Psoas muscle (tissue), 8 donors: ENCODE measurements at regions of chr11 and their contacts with region 1.

Region 1: DNA sequence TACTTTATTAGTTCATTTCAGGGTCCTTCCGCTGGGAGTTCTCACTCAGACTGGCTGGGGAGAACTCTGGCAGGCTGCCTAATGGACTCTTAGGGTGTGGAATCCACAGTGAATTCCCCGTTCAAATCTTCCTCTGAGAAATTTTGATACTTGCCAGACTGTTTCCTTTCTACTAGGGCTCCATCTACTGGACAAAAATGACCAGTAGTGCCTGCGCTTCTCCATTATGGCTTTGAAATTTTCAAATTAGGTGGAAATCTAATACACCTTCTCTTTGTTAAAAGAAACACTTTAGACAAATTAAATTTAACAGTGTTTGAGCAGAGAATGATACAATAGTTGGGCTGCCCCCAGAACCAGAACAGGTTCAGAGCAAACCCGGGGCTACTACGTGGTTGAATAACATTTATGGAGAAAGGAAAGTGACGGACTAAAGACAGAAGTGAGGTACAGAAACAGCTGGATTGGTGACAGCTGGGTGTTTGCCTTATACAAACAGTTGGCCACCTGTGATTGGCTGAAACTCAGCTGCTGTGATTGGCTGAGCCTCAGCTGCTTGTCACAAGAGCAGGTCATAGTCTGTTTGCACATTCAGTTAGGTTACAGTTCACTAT is 52.9 kb upstream of the FDX1 start:
- DNase-seq: peak; percentile 60 to 69
- ATAC-seq: peak; percentile 78 to 93 (median 86)
- H3K4me3 ChIP-seq: peak overlapping the region; percentile 46
- H3K27ac ChIP-seq: peak overlapping the region; percentile 51
- H3K4me1 ChIP-seq: no peaks in the 10 kb centered on the region
- H3K27me3 ChIP-seq: no peaks in the 10 kb centered on the region
- CTCF ChIP-seq: peak; percentile 76

Region 2: GRCh38 chr11:109853156-109853776 is 523.6 kb before region 1 on chr11:
- intact Hi-C with region 1: loop called in 1 of 2 experiments (anchors 10 kb)
- DNase-seq: no peak
- ATAC-seq: no peak
- H3K4me3 ChIP-seq: no peak overlapping the region
- H3K27ac ChIP-seq: no peak overlapping the region
- H3K4me1 ChIP-seq: no peaks in the 10 kb centered on the region
- H3K27me3 ChIP-seq: no peaks in the 10 kb centered on the region
- CTCF ChIP-seq: peak; percentile 51

Region 3: DNA sequence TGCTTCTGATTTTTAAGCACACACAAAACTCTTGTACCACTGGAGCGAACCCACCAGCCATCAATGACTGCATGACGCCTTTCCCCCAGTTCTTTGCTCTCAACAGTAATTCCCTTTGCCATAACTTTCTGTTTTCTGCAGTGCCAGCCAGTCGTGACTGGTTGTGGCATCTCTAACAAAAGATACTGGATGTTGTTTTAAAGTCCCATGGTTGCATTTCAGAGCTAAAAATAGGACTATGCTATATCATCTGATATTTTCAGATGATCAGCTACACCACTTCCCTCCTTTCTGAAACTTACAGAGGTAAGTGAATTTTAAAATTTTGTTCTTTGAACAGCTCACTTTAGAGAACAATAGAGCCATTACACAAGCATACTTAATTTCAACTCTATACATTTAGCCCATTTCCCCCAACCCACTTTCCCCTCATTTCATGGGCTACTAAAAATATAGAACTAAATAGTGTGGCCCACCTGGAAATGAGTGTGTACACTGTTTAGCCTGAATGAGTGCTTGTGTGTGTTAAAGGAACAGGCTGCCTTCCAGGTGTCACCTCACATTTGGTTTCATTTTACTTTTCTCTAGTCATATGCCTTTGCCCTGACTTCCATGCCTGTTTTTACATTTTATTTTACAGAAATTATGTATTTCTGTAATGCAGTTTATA is 420.6 kb before region 1 on chr11:
- intact Hi-C with region 1: loop called in 1 of 2 experiments (anchors 5 kb)
- DNase-seq: no peak
- ATAC-seq: no peak
- H3K4me3 ChIP-seq: no peak overlapping the region
- H3K27ac ChIP-seq: no peak overlapping the region
- H3K4me1 ChIP-seq: peaks cover 8% of the 10 kb centered on the region
- H3K27me3 ChIP-seq: no peaks in the 10 kb centered on the region
- CTCF ChIP-seq: no peak

Region 4: GRCh38 chr11:110195845-110196754 is 180.7 kb before region 1 on chr11:
- intact Hi-C with region 1: loop called (anchors 2 kb)
- DNase-seq: no peak
- ATAC-seq: no peak
- H3K4me3 ChIP-seq: no peak overlapping the region
- H3K27ac ChIP-seq: no peak overlapping the region
- H3K4me1 ChIP-seq: no peaks in the 10 kb centered on the region
- H3K27me3 ChIP-seq: no peaks in the 10 kb centered on the region
- CTCF ChIP-seq: no peak

Region 5: GRCh38 chr11:110296226-110297075 is 80.4 kb before region 1 on chr11 and contains the start of gene RDX:
- intact Hi-C with region 1: loop called (anchors 5 kb)
- DNase-seq: peak; percentile 79 to 88
- ATAC-seq: peak; percentile 91 to 93 (median 92)
- H3K4me3 ChIP-seq: peak within 1 kb of the TSS; percentile 97
- H3K27ac ChIP-seq: peak within 1 kb of the TSS; percentile 98
- H3K4me1 ChIP-seq: peaks cover 34% of the 10 kb centered on the region
- H3K27me3 ChIP-seq: no peaks in the 10 kb centered on the region
- CTCF ChIP-seq: peak; percentile 29
- total RNA-seq, gene RDX: 115 to 206 (median 144) TPM

Region 6: DNA sequence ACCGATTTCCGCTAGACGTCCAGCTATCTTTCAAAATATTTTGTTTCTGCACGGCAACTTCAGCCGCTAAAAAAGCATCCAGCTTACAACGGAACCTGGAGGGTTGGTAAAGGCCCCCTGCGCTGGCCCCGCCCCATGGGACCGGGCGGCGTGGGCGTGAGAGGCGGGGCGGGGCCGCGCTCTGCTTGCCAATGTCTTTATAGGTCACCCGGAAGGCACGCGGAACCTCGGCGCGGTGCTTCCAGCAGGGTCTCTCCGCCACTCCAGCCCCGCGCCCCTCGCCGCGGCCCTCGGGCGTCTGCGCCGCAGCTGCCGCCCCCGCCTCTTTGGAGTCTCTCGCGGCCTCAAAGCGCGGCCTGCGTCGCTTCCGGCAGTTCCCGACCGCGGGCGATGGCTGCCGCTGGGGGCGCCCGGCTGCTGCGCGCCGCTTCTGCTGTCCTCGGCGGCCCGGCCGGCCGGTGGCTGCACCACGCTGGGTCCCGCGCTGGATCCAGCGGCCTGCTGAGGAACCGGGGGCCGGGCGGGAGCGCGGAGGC is 53.0 kb after region 1 on chr11 and contains the start of gene FDX1:
- intact Hi-C with region 1: loop called in 1 of 2 experiments (anchors 5 kb)
- DNase-seq: peak; percentile 84 to 89
- ATAC-seq: peak; percentile 93 to 94 (median 94)
- H3K4me3 ChIP-seq: peak within 1 kb of the TSS; percentile 87
- H3K27ac ChIP-seq: peak within 1 kb of the TSS; percentile 92
- H3K4me1 ChIP-seq: peaks cover 33% of the 10 kb centered on the region
- H3K27me3 ChIP-seq: no peaks in the 10 kb centered on the region
- CTCF ChIP-seq: peak; percentile 66
- total RNA-seq, gene FDX1: 14.0 to 23.7 (median 15.6) TPM